AG04450 (cell line): ENCODE measurements at regions of chr16 and their contacts with region 1.

Region 1: DNA sequence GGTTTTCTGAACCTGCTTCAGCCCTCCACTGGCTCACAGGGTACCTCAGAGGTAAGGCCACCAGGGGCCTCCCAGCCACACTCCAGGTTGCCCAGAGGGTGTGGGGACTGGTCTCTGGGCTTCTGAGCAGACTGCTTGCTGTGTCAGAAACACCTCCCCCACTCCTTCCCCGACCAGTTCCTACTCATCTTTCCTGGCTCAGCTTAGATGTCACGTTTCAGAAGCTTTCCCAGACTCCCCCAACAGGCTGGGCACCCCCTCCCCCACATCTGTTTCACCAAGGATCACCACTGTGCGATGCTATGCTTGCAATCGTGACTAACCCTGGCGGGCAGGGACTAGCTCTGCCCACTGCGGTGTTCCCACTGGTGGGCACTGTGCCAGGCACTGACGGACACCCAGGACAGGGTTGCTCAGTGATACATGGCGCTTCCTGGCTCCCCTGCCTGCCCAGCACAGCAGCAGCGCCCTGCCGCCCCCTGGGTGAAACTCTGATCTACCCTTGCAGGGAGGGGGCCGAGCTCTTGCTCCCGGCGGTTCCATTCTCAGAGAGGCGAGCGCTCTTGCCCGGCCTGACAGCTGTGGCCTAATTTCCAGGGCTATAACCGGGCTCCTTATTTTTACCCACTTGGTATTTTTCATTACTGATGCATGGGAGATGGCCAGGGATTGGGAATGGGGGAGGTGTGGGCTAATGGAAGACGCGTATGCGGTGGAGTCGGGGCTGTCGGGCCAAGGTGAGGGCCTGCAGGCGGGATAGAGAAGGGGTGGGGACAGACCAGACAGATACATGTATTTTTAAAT is 29.4 kb upstream of the MTSS2 start:
- DNase-seq: peak; percentile 92
- H3K4me3 ChIP-seq: no peak overlapping the region
- H3K27ac ChIP-seq: peak overlapping the region; percentile 98
- H3K27me3 ChIP-seq: no peaks in the 10 kb centered on the region
- CTCF ChIP-seq: peak; percentile 20; the same call in 1 of the 2 replicates

Region 2: DNA sequence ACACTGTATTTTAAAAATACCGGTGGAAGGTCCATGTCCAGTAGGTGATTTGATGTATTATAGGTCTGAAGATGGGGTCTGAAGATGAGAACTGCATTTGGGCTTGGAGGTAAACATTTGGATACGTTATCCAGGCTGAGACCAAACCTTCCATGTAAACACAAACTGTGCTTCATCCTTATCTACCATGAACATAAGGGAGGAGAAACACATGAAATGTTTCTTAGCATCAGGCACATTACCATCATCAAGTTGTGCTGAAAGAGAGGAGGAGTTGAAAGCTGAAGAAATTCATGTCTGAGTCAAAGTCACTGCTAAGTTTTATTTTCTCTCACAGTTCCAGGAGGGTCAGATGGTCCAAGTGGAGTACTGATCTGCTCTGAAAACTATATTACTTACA is 180.3 kb before region 1 on chr16:
- CTCF ChIA-PET with region 1: no interaction called
- POLR2A ChIA-PET with region 1: no interaction called
- DNase-seq: no peak
- H3K4me3 ChIP-seq: no peak overlapping the region
- H3K27ac ChIP-seq: no peak overlapping the region
- H3K27me3 ChIP-seq: no peaks in the 10 kb centered on the region
- CTCF ChIP-seq: no peak

Region 3: DNA sequence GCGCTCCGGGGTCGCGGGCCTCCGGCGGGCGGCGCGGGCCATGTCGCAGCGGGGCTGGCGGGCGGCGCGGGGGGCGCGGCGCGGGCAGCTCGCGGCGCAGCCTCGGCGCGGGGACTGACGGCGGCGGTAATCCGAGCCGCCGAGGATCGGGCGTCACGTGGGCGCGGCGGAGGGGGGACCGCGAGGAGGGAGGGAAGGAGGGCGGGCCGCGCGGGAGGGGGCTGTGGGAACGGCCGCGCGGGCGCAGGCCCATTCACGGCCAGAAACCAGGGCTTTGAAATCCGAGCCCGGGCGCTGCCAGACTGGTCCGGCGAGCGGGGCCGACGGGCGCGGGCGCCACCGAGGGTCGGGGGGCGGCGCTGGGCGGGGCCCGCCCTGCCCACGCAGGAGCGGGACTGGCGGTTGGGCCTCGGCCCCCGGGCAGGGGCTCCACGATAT is 29.3 kb before region 1 on chr16 and contains the start of gene MTSS2:
- CTCF ChIA-PET with region 1: interaction called, 3 read pairs
- POLR2A ChIA-PET with region 1: interaction called, 11 read pairs
- DNase-seq: peak; percentile 68
- H3K4me3 ChIP-seq: peak within 1 kb of the TSS; percentile 82
- H3K27ac ChIP-seq: peak within 1 kb of the TSS; percentile 52
- H3K27me3 ChIP-seq: no peaks in the 10 kb centered on the region
- CTCF ChIP-seq: no peak
- polyA plus RNA-seq, gene MTSS2: 57.9 and 80.1 TPM in 2 replicates

Region 4: DNA sequence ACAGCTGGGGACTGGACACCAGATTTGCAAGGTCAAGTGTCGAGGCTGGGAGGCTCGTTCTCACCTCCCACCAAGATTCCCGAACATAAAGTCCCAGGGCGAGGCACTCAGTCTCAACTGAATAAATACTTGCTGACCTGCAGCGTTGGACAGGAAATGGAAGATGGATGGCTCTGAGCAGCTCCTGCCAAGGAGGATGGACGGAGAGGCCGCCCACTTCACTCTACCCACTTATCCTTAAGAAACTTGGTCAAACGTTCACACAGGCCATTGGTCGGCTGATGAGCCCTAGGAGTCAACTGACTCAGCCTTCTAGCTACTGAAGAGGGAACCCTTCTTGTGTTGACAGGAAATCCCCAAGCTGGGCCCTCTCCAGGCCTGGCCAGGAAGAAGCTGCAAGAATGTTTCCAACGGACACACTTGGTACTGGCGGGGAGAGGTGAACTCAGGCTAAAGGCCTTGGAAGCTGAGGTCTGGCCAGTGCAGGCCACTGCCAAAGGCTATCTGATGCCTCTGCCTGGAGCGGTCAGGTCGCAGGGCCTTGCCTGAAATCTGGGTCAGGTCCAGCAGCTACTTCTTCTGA is 35.7 kb after region 1 on chr16:
- CTCF ChIA-PET with region 1: no interaction called
- POLR2A ChIA-PET with region 1: interaction called, 10 read pairs
- DNase-seq: peak; percentile 96
- H3K4me3 ChIP-seq: no peak overlapping the region; the same call in 1 of the 2 replicates
- H3K27ac ChIP-seq: peak overlapping the region; percentile 84
- H3K27me3 ChIP-seq: no peaks in the 10 kb centered on the region
- CTCF ChIP-seq: no peak

Region 5: GRCh38 chr16:70789226-70789926 is 74.1 kb after region 1 on chr16:
- CTCF ChIA-PET with region 1: no interaction called
- POLR2A ChIA-PET with region 1: no interaction called
- DNase-seq: no peak
- H3K4me3 ChIP-seq: no peak overlapping the region
- H3K27ac ChIP-seq: peak overlapping the region; percentile 61
- H3K27me3 ChIP-seq: no peaks in the 10 kb centered on the region
- CTCF ChIP-seq: no peak